Vagina (tissue), 2 donors: ENCODE measurements at regions of chr2 and their contacts with region 1.

Region 1: GRCh38 chr2:187499941-187500532 is 52.0 kb upstream of the CALCRL start:
- DNase-seq: no peak
- H3K4me3 ChIP-seq: no peak overlapping the region
- H3K27ac ChIP-seq: no peak overlapping the region
- H3K4me1 ChIP-seq: no peaks in the 10 kb centered on the region
- H3K27me3 ChIP-seq: no peaks in the 10 kb centered on the region
- CTCF ChIP-seq: peak; percentile 76 to 89 (median 81)
- POLR2A ChIP-seq: no peak

Region 2: GRCh38 chr2:187567126-187567525 is 67.1 kb after region 1 on chr2:
- intact Hi-C with region 1: loop called (anchors 10 kb)
- DNase-seq: no peak
- H3K4me3 ChIP-seq: no peak overlapping the region
- H3K27ac ChIP-seq: no peak overlapping the region
- H3K4me1 ChIP-seq: no peaks in the 10 kb centered on the region
- H3K27me3 ChIP-seq: no peaks in the 10 kb centered on the region
- CTCF ChIP-seq: no peak
- POLR2A ChIP-seq: no peak